Right ventricle myocardium superior (tissue), 1 donor: ENCODE measurements at regions of chr5 and their contacts with region 1.

Region 1: DNA sequence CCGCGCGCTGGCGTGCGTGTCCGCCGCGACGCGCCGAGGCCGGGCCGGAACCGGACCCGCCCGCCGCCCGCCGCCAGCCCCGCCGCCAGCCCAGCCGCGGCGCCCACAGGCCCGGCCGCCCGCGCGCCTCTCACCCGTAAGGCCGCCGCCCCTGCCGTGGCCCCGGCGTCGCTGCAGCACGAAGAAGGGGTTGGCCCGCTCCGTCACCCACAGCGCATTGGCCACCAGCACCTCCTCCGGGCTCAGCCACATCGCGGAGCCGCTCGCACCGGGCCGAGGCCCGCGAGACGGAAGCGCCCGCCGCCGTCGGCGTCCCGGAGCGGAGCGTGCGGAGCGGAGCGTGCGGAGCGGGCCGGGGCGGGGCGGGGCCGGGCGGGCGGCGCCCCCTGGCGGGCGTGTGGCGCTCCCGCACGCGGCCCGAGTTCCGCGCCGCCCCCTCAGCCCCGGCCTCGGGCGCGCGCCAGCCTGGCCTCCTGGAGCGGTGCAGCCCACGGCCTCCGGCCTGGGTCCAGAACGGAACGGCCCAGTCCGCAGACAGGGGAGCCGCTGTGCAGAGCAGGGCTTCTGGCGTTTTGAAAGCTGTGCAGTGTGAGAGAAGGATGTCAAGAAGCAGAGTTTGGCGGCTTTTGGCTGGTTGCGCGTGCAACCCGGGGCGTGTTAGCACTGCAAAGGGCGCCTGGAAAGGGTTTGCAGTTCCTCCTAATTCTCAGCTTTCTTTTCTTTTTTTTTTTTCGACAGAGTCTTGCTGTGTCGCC is at the start of gene TBC1D9B:
- DNase-seq: peak; percentile 85
- ATAC-seq: peak; percentile 95
- total RNA-seq, gene TBC1D9B: 29.6 TPM

Region 2: DNA sequence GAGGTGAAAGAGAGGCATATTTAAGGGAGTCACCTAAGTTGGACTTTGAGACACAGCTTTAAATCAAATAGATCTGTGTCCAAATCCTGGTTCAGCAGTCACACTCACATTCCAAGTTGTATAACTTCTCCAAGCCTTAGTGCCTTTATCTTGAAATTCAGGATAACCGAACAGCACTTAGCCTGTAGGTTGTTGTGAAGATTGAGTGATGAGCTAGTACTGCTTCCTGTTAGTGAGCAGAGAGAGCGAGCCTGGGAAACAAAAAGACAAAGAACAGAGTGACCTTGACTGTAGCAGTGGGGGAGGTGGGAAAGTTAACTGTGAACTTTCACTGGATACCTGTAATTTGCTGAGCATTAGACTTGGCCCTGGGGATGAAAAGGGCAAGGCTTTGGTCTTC is 152.7 kb before region 1 on chr5:
- intact Hi-C with region 1: no loop called
- DNase-seq: no peak
- ATAC-seq: peak; percentile 30

Region 3: DNA sequence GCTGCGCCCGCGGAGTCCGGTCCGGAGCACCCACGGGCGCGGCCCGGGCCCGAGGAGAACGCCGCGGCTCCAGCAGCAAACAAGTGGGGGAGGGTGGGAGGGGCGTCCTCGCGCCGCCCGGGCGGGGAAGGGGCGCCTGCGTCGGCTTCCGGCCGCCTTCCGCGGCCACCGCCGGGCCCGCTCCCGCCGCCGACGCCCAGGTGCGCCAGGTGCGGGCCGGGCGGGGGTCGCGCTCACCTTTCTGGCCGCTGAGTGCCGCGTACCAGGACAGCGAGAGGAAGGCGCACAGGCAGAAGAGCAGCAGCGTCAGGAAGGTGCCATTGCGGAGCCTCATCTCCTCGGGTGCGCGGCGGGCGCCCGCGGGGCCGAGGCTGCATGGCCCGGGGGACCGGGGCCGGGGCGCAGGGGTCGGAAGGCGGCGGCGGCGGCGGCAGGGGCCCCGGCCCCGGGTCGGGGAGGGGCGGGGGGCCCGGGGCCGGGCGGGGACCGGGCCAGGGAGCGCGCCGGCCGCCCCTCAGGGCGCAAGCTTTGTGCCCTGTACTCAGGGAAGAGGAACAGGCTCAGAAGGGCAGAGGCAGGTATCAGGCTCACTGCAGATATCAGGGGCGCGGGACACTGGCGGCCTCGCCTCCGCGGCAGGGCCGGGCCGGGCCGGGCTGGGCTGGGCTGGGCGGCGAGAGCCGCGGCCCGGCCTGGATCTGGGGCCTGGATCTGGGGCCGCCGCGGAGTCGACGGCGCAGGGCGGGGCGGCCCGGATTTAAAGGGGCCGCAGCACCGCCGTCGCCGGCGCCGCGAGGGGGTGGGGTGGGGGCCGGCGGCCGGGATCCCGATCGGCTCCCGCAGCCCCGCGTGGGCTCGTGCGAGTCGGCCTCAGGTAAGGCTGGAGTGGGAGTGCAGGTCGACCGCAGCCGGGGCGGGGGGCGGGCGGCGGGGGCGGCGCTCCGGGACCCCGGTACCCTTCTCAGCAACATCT is 101.2 kb before region 1 on chr5 and contains the start of gene MGAT4B:
- intact Hi-C with region 1: loop called (anchors 10 kb)
- DNase-seq: peak; percentile 87
- ATAC-seq: peak; percentile 90
- total RNA-seq, gene MGAT4B: 93.3 TPM

Region 4: DNA sequence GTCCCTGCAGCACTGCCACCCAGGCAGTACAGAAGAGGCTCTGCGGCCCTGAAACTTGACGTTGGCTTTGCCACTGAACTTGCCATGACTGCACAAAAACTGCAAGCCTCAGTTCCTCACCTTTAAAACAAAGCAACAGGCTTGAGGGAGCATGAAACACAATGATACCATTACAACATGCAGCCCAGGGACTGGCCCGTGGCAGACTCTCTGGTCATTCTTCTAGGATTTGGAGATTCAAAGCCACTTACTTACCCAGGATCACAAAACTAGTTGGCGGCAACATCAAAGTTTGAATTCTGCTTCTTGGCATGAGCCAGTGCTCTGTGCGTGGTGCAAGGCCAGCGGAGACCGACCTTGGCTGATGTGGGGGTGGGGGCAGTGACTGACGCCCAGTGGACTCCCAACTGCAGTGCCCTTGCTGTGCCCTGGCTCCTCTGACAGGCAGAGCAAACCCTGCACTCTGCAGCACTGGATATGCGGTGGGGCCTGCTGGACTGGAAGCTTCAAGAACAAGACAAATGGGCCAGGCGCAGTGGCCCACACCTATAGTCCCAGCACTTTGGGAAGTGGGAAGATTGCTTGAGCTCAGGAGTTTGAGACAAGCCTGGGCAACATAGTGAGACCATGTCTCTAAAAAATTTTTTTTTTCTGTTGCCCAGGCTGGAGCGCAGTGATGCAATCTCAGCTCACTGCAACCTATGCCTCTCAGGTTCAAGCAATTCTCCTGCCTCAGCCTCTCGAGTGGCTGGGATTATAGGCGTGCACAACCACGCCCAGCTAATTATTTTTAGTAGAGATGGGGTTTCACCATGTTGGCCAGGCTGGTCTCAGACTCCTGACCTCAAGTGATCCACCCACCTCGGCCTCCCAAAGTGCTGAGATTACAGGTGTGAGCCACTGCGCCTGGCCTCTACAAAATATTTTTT is 68.2 kb before region 1 on chr5:
- intact Hi-C with region 1: no loop called
- DNase-seq: peak; percentile 60
- ATAC-seq: peak; percentile 70